ENCODE measurements at regions of chr21 and their contacts with region 1.

Region 1: DNA sequence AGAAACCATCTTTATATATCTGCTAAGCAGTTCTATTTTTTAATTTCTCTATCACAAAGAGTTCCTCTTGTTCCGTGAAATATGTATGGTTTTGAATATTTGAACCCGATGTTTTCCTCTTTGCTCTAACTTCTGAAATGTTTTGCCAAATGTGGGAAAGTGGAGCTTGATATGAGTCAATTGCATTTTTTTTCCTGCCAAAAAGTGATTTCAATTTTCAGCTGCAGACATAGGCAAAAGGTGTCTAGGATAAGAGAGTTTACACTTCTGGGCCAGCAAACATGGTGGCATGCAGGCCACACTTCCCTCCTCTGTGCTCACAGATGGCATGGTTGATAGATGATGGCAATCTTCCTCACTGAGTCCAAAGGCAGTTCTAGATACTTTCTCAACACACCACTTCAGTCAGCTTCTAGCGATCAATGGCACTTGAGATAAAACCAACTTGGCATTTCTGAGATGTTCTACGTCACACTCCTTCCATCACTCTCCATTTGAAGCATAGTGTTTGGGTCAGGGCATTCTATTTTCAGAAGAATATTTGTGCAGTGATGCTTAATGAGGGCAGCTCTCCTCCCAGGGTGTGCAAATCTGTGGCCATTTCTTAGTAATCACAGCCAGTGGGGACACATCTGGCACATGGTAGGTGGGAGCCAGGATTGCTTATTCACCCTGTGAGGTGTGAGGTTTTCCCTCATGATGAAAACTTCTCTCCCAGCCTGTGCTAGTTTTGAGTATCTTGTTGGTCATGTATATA is 54.4 kb upstream of the SCAF4 start:
- H3K4me3 Mint-ChIP-seq: no peak overlapping the region
- H3K27ac Mint-ChIP-seq: no peak overlapping the region
- H3K4me1 Mint-ChIP-seq: peaks cover 22% of the 10 kb centered on the region
- H3K27me3 Mint-ChIP-seq: peaks cover 7% of the 10 kb centered on the region

Region 2: DNA sequence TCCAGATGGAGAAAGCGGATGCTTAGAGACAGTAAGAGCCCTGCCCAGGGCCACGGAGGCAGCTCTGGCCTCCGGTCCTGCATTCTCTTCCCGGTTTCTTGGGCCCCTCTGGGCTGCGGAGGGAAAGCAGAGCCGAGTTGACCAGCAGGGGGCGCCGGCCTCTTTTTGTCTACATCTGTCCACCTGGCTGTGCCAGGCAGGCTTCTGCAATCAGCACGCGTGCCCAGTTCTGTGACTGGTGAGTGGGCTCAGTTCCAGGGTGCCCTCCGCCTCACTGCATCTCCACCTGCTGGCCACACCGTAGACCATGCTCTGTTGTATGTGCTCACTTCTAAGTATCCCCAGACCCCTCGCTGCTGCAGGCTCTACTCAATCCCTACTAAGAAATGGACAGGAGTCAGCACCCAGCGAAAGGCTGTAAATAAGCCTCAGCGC is 79.8 kb after region 1 on chr21:
- intact Hi-C with region 1: loop called (anchors 2 kb)
- H3K4me3 Mint-ChIP-seq: no peak overlapping the region
- H3K27ac Mint-ChIP-seq: no peak overlapping the region
- H3K4me1 Mint-ChIP-seq: no peaks in the 10 kb centered on the region
- H3K27me3 Mint-ChIP-seq: peaks cover 27% of the 10 kb centered on the region